BJ (cell line): ENCODE measurements at regions of chr20 and their contacts with region 1.

Region 1: DNA sequence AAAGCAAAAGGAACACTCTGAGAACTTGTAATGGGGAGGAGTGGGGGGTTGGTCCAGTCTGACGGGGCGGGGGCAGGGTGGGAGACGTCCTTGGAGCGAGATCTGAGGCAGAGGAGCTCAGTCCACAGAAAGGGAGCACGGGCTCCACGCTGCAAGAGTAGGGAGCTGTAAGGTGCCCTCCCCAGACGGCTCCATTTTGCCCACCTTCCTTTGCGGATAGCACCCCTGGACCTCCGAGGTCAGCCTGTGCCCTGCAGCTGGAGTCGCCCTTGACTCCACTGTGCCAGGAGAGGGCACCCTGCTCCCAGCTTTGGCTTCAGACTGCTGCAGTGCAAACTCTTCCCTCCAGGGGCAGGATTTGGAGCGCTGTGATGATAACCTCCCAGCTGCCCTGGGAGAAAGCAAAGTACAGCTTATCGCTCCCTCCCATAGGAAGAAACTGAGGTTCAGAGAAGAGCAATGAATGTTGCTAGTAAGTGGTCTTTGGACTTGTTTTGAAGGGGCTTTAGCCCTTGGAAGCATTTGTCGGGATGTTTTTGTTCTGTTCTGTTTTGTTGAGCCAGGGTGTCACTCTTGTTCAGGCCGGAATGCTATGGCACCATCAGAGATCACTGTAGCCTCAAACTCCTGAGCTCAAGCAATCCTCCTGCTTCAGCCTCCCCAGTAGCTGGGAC is 9.5 kb upstream of the AHCY start:
- DNase-seq: no peak
- H3K4me3 ChIP-seq: peak overlapping the region; percentile 3; the same call in 1 of the 2 replicates
- H3K27me3 ChIP-seq: no peaks in the 10 kb centered on the region
- CTCF ChIP-seq: peak; percentile 100

Region 2: DNA sequence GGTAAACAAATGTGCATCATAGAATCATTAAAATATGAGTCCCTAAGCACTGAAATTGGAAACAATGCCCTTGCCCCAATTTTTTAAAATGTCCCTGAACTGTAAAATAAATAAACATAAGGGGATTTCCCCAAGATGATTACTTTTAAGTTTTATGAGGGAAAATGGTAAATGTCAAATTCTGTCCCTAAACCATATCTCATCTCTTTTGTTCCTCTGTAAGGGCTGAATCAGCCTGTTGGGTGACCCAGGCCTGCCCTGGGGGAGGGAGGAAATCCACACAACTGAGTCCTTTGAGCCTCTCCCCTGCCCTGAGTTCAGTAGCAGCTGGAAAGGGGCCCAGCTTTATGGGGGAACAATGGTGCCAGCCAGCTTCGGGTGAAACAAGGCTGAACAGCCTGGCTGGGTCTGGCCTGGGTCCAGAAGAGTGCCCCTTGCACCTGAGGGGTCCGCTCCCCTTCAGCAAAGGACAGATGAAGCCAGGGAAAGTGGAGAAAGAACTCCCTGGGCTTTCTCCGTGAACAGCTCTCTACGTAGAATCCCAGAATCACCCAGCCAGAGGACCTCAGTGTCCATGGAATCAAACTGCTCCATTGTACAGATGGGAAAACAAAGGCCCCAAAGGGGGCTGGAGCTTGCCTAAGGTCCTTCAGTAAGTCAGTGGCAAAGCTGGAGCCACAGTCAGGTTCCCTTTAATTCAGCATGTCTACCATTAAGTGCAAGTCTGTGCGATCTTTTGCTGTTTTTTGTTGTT is 22.1 kb after region 1 on chr20:
- CTCF ChIA-PET with region 1: interaction called, 12 read pairs
- POLR2A ChIA-PET with region 1: no interaction called
- DNase-seq: no peak
- H3K4me3 ChIP-seq: no peak overlapping the region
- H3K27me3 ChIP-seq: no peaks in the 10 kb centered on the region
- CTCF ChIP-seq: no peak

Region 3: GRCh38 chr20:34393911-34394310 is 81.2 kb after region 1 on chr20:
- CTCF ChIA-PET with region 1: no interaction called
- POLR2A ChIA-PET with region 1: no interaction called
- DNase-seq: no peak
- H3K4me3 ChIP-seq: no peak overlapping the region
- H3K27me3 ChIP-seq: no peaks in the 10 kb centered on the region
- CTCF ChIP-seq: no peak

Region 4: DNA sequence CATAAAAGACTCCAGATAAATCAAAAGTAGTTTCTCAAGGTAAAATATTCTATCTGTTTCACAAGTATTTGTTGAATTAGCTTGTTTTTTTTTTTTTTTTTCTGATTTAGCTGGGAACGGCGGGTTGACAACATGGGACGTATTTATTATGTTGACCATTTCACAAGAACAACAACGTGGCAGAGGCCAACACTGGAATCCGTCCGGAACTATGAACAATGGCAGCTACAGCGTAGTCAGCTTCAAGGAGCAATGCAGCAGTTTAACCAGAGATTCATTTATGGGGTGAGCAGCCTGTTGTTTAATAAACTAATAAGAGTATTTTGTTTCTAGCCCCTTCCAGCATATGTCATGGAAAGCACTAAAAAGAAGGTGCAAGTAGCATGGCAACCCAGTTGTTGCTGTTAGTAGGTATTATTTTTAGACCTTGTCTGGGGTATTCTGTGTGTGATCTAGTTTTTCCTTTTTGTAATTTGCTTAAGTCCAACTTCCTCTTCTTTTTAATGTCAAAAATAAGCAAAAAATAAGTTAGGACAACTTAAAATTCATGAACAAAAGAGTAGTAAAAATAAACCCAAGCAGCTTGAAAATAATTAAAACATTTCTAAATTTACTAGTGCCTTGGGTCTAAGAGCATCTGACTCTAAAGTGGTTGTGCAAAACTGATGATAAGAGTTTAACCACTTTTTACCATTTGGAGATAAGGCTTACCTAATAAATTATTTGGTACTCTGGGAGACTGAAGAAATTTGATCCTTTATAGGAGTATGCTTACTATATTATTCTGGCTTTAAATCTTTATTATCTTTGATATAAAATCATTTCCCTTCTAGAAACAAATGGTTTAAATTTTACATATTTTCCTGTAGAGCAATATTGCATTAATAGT is 132.7 kb after region 1 on chr20:
- CTCF ChIA-PET with region 1: interaction called, 12 read pairs
- POLR2A ChIA-PET with region 1: no interaction called
- DNase-seq: no peak
- H3K4me3 ChIP-seq: no peak overlapping the region
- H3K27me3 ChIP-seq: no peaks in the 10 kb centered on the region
- CTCF ChIP-seq: no peak

Region 5: DNA sequence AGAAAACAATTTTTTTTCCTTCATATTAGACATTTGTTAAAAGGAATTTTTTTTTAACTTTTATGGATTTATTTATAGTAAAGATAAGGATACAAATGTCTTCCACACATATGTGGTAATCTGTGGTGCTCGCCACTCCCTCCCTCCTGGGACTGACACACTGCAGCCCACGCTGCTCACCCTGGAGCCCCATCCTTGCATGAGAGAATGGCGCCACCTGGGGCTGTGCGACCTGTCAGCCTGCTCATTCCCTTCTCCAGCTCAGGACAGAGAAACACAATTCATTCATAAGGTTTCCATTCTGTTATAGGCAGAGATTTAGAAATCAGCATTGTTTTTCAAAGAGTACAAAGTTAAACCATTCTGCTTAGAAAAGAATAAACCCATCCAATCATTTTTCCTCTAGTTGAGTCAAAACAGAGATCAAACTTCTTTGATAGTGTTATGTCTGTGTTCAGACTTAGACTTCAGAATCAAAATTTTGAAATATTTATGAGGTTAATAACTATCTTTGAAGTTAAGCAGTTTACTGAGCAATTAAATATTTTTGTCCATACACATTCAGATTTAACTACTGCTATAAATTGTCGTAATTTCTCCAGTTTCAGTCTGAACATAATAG is 160.7 kb after region 1 on chr20:
- CTCF ChIA-PET with region 1: interaction called, 43 read pairs
- POLR2A ChIA-PET with region 1: no interaction called
- DNase-seq: no peak
- H3K4me3 ChIP-seq: no peak overlapping the region
- H3K27me3 ChIP-seq: no peaks in the 10 kb centered on the region
- CTCF ChIP-seq: peak; percentile 53

Region 6: DNA sequence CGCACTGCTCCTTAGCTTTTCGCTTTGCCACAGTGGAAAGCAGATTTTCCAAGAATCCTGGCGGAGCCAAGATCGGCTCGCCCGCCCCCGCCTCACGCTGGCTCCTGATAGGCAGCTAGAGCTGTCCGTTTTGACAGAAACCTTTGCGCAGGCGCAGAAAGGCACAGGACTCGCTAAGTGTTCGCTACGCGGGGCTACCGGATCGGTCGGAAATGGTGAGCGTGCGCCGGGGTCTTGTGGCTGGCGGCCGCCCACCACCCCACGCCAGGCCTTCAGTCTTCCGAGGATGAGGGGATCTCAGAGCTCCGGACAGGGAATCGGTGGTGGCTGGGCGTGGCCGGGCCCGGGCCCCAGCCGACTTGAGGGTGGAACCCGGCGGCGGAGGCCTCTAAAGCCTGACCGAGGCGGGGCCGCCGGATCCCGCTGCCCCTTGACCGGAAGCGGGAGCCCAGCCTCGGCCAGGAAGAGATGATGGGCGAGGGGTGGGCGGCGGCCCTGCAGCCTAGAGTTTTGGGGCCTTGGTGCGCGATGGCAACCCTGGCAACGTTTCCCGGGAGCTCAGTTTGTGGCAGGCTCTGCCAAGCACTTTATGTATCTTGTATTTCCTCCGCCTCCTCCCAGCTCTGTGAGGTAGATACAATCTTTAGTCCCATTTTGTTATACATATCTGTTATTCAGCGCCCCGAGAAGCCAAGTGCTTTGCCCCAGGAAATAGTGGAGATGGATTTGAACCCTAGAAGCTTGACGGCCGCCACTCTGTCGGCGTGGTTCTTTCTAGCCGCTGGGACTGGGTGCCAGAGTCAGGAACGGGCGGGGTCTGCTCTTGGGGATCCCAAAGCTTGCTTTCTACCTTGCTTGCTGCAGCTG is 203.8 kb after region 1 on chr20 and contains the start of gene DYNLRB1:
- CTCF ChIA-PET with region 1: interaction called, 63 read pairs
- POLR2A ChIA-PET with region 1: no interaction called
- DNase-seq: peak; percentile 77
- H3K4me3 ChIP-seq: peak within 1 kb of the TSS; percentile 93
- H3K27me3 ChIP-seq: no peaks in the 10 kb centered on the region
- CTCF ChIP-seq: no peak
- polyA plus RNA-seq, gene DYNLRB1: 310 and 320 TPM in 2 replicates

Region 7: GRCh38 chr20:34709044-34709830 is 396.6 kb after region 1 on chr20:
- CTCF ChIA-PET with region 1: interaction called, 14 read pairs
- POLR2A ChIA-PET with region 1: no interaction called
- DNase-seq: no peak
- H3K4me3 ChIP-seq: peak overlapping the region; percentile 67
- H3K27me3 ChIP-seq: no peaks in the 10 kb centered on the region
- CTCF ChIP-seq: no peak